ENCODE measurements at regions of chr4 and their contacts with region 1.

Region 1: GRCh38 chr4:70559211-70559830 is 32.7 kb upstream of the AMBN start:
- DNase-seq: peak; percentile 40
- H3K4me3 ChIP-seq: no peak overlapping the region
- H3K27ac ChIP-seq: no peak overlapping the region
- H3K4me1 ChIP-seq: no peaks in the 10 kb centered on the region
- H3K27me3 ChIP-seq: no peaks in the 10 kb centered on the region
- CTCF ChIP-seq: peak; percentile 62

Region 2: DNA sequence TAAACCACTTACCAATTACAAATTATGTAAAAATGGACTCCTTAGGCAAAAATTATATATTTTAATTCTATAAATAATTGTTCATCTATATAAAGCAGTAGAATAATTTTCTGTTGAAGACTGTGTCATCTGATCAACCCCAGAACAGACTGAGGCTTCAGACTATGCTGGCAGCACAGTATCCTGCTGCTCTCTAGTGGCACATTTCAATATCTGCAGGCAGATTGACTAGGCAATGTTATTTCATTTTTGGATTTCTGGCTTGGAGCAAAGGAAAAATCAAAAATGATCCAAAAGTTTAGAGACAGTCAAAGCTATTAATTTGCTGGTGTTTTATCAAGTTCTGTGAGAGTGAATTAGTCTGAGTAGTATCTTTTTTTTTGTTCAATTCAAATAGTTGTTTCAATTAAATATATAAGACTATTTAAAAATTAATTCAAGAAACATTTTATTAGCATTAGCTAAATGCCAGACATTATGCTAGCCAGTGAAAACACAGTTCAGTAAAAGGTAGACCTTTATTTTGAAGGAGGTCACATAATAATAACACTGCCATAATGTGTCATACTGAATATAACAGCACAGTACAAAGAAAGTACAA is 678.0 kb before region 1 on chr4:
- CTCF ChIA-PET with region 1: no interaction called
- POLR2A ChIA-PET with region 1: no interaction called
- intact Hi-C with region 1: loop called (anchors 10 kb)
- DNase-seq: peak; percentile 52
- H3K4me3 ChIP-seq: no peak overlapping the region
- H3K27ac ChIP-seq: no peak overlapping the region
- H3K4me1 ChIP-seq: no peaks in the 10 kb centered on the region
- H3K27me3 ChIP-seq: no peaks in the 10 kb centered on the region
- CTCF ChIP-seq: peak; percentile 74

Region 3: DNA sequence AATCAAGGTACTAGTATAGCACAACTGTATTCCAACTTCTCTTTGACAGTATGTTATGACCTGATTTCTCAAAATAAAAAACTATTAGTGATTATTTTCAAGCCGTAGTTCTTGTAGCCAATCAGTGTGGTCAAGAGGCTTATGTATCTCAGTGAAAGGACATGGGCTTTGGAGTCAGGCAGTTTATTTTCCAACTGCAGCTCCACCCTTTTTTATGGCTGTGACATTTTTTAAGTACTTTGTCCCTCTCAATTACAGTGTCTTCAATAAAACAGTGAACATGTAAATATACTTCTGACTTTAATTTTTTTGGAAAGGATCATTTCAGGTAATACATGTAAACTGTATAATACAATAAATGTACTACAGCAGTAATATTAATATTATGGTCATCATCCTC is 479.1 kb before region 1 on chr4:
- CTCF ChIA-PET with region 1: no interaction called
- POLR2A ChIA-PET with region 1: no interaction called
- intact Hi-C with region 1: no loop called
- DNase-seq: no peak
- H3K4me3 ChIP-seq: no peak overlapping the region
- H3K27ac ChIP-seq: no peak overlapping the region
- H3K4me1 ChIP-seq: no peaks in the 10 kb centered on the region
- H3K27me3 ChIP-seq: no peaks in the 10 kb centered on the region
- CTCF ChIP-seq: no peak

Region 4: GRCh38 chr4:70405765-70406164 is 153.6 kb before region 1 on chr4:
- CTCF ChIA-PET with region 1: no interaction called
- POLR2A ChIA-PET with region 1: no interaction called
- intact Hi-C with region 1: no loop called
- DNase-seq: no peak
- H3K4me3 ChIP-seq: no peak overlapping the region
- H3K27ac ChIP-seq: no peak overlapping the region
- H3K4me1 ChIP-seq: no peaks in the 10 kb centered on the region
- H3K27me3 ChIP-seq: no peaks in the 10 kb centered on the region
- CTCF ChIP-seq: no peak

Measured in A673 (cell line).